Activated CD4-positive, alpha-beta T cell treated with anti-CD3 and anti-CD28 coated beads for 36 hours (primary cell): ENCODE measurements at regions of chr2 and their contacts with region 1.

Region 1: DNA sequence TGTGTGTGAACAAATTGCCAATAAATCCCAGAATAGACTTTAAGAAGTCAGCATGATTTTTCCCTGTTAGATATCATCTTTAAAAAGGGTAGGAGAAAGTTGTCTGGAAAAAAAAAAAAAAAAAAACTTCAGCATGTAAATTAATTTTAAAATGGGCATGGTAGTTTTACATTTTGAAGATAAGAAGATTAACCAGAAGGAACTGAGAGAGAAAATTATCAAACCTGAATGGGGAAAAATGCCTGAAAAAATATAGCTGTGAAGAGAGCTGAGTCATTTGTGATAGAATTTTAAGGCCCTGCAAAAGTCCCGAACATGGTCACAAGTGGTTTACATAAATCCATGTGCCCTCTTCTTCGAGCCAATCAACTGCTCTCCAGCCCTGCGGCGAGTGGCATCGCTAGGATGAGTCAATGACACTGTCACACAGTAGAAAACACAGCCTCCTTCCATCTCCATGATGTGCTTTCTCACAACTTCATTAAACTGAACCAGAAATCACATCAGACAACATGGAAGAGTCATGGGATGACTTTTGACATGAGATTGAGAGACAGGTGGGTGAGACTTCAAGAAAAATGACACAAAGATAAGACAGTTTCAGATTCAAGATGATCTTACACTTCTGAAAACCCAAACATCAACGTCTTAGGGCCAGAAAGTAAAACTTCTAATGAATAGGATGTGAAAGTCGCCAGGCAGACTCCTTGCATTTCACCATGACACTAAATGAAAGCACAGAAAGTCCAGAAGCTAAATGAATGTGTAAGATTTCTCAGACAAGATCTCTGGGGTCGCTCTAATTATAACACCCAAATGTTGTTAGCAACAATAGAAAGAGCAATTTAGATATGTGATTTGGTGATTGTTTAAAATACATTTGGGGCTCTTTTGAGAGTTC is 273.0 kb upstream of the ID2 start:
- DNase-seq: peak; percentile 88
- ATAC-seq: peak; percentile 97
- H3K4me3 Mint-ChIP-seq: peak overlapping the region; percentile 28
- H3K27ac Mint-ChIP-seq: peak overlapping the region; percentile 84
- H3K4me1 Mint-ChIP-seq: peaks cover 33% of the 10 kb centered on the region
- H3K27me3 Mint-ChIP-seq: peaks cover 10% of the 10 kb centered on the region

Region 2: DNA sequence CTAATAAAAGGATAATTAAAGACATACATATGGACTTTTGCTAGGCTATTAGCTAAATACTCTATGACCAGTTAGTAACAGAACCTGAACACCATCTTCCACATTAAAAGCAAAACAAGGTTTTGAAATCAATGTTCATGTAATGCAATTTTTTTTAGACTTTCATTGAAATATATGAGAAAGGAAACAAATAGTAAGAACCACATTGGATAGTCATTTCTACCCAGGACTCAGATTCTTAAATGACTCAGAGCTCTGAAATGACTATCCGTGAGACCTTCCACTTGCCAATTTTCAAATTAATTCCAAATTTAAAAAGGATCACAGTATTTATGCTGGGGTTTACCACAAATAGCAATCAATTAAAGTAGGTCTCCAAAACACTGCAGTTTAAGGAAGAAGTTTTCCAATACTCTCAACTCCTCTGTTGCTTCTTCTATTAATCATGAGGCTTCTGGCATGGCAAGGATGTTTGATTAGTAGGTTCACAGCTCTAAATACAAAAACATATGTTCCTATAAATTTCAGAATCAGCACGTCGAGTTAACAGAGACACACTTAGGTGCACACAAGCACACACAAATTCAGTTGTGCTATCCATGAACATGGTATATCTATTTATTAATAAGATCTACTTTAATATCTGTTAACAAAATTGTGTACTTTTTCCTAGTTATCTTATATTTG is 650.6 kb before region 1 on chr2:
- CTCF ChIA-PET with region 1: no interaction called
- POLR2A ChIA-PET with region 1: no interaction called
- intact Hi-C with region 1: loop called in 1 of 2 experiments (anchors 2 kb)
- DNase-seq: no peak
- ATAC-seq: peak; percentile 82
- H3K4me3 Mint-ChIP-seq: no peak overlapping the region
- H3K27ac Mint-ChIP-seq: peak overlapping the region; percentile 62
- H3K4me1 Mint-ChIP-seq: peaks cover 16% of the 10 kb centered on the region
- H3K27me3 Mint-ChIP-seq: peaks cover 14% of the 10 kb centered on the region

Region 3: DNA sequence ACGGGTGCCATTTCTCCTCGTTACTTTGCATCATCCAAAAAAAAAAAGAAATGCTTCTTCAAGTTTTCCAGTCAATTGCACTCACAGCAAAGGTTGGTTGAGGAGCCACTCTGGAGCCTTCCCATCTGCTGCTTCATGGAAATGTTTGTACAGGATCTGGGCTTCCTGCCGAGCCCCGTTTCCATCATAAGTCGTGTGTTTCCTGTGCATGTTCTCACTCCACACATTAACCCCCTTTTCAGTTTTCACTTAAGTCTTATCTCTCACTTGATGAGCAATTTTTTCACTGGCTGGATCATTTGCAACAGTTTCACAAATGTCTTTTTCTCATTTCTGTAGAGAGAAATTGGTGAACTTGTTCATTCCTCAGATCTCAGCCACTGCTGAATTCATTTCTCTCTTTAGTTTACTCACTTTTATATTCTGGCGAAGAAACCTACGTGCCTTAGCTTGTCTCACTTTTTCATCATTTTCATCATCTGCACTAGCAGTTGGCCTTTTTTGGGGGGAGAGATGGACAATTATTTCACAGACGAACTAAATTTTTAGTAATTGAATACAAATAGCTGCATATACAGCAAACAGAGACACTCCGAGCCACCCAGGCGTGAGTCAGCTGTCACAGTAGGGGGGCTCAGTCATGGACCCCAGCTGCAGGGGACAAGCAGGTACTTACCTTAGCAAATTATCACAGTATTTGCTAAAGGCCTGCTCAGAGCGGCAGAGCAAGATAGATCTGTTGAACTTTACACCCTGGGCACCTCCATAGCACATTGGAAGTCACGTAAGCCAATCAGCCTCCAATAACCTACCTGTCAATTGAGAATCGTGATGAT is 477.8 kb before region 1 on chr2:
- CTCF ChIA-PET with region 1: no interaction called
- POLR2A ChIA-PET with region 1: no interaction called
- intact Hi-C with region 1: loop called in 1 of 2 experiments (anchors 2 kb)
- DNase-seq: peak; percentile 56
- ATAC-seq: peak; percentile 80
- H3K4me3 Mint-ChIP-seq: peak overlapping the region; percentile 0
- H3K27ac Mint-ChIP-seq: peak overlapping the region; percentile 93
- H3K4me1 Mint-ChIP-seq: peaks cover 33% of the 10 kb centered on the region
- H3K27me3 Mint-ChIP-seq: no peaks in the 10 kb centered on the region

Region 4: DNA sequence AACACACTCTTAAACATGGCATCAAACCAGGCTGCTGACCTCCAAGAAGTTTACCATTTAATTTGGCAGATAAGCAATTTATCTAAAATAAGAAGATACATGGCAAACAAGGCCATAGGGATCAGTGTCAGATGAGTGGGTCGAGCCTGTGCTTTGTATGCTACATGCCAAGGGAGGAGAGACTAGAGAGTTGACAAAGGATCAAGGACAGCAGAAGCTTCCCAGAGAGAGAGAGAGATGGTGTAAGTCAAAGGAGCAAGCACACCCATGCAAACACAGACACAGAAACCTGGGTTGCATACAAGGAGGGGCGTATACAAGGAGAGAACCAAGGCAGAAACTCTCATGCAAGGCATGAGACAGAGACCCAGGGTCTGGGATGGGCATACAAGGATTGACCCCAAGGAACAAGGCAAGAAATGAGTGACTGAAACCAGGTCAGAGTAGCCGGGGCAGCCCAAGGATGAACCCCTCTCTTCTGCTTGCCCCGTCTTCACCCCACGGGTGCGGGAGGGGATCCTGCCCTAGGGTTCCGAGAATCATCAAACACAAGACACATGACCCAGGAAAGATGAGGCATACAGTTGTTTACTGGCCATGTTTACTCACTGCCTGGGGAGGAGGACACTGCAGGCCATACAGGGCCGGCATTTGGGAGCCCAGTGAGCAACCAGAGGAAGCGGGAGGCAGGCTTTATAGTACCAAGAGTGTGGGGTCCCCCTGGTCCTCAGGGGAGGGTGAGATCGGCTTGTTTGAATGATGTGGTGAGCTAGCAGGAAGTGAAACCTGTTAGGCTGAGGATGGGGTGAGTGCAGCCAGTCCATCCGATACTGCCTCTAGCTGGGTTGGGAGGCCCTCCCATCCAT is 256.2 kb before region 1 on chr2:
- CTCF ChIA-PET with region 1: no interaction called
- POLR2A ChIA-PET with region 1: interaction called, 6 read pairs
- intact Hi-C with region 1: loop called (anchors 1 to 2 kb)
- DNase-seq: no peak
- ATAC-seq: no peak
- H3K4me3 Mint-ChIP-seq: no peak overlapping the region
- H3K27ac Mint-ChIP-seq: no peak overlapping the region
- H3K4me1 Mint-ChIP-seq: peaks cover 30% of the 10 kb centered on the region
- H3K27me3 Mint-ChIP-seq: no peaks in the 10 kb centered on the region

Region 5: GRCh38 chr2:8456151-8456845 is 47.5 kb after region 1 on chr2:
- CTCF ChIA-PET with region 1: no interaction called
- POLR2A ChIA-PET with region 1: interaction called, 3 read pairs
- intact Hi-C with region 1: loop called in 1 of 2 experiments (anchors 1 kb)
- DNase-seq: peak; percentile 75
- ATAC-seq: peak; percentile 73
- H3K4me3 Mint-ChIP-seq: peak overlapping the region; percentile 69
- H3K27ac Mint-ChIP-seq: peak overlapping the region; percentile 89
- H3K4me1 Mint-ChIP-seq: peaks cover 42% of the 10 kb centered on the region
- H3K27me3 Mint-ChIP-seq: peaks cover 7% of the 10 kb centered on the region

Region 6: DNA sequence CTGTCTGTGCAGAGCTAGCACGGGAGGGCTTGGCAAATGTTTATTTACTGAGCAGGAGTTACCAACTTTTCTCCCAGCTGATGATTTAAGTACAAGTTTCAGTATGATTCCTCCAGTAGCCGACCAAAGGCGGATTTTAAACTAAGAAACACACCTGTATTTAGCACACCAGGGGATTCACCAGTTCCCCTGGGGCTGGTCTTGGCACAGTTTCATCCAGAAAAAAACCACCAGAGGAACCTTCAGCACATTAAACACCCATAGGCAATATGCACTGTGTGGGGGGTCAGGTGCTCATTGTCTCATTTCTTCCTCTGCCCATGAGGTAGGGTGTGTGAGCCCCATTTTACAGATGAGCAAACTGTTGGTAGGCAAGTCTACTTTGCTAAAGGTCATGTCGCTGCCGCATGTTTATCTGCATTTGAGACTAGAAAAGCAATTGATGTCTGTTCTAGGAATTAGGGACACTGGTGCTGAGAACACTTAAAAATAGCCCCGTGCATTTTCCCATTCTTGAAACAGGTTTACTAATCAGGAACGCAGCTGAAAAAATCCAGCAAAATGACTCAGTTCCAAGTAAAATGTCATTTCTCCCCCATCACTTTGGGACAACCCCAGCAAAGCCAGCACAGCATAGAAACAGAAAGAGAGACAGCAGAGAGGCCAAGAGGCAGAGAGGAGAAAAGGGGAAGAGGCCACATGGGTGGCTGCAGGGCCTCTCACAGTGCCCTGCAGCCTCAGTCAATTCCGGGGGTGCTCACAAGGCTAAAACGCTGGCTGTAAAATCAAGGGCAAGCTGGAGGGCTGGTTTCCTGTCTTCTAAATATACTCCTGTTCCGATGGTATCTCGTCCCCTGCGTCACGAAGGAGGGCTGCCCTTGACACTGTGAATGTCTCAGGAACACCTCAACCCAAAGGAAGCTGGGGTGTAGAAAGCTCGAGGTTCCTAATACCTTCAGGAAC is 106.3 kb after region 1 on chr2:
- CTCF ChIA-PET with region 1: no interaction called
- POLR2A ChIA-PET with region 1: interaction called, 19 read pairs
- intact Hi-C with region 1: loop called (anchors 1 kb)
- DNase-seq: peak; percentile 82
- ATAC-seq: peak; percentile 86
- H3K4me3 Mint-ChIP-seq: peak overlapping the region; percentile 46
- H3K27ac Mint-ChIP-seq: peak overlapping the region; percentile 93
- H3K4me1 Mint-ChIP-seq: peaks cover 63% of the 10 kb centered on the region
- H3K27me3 Mint-ChIP-seq: no peaks in the 10 kb centered on the region